T-cell (primary cell): ENCODE measurements at regions of chr12 and their contacts with region 1.

Region 1: DNA sequence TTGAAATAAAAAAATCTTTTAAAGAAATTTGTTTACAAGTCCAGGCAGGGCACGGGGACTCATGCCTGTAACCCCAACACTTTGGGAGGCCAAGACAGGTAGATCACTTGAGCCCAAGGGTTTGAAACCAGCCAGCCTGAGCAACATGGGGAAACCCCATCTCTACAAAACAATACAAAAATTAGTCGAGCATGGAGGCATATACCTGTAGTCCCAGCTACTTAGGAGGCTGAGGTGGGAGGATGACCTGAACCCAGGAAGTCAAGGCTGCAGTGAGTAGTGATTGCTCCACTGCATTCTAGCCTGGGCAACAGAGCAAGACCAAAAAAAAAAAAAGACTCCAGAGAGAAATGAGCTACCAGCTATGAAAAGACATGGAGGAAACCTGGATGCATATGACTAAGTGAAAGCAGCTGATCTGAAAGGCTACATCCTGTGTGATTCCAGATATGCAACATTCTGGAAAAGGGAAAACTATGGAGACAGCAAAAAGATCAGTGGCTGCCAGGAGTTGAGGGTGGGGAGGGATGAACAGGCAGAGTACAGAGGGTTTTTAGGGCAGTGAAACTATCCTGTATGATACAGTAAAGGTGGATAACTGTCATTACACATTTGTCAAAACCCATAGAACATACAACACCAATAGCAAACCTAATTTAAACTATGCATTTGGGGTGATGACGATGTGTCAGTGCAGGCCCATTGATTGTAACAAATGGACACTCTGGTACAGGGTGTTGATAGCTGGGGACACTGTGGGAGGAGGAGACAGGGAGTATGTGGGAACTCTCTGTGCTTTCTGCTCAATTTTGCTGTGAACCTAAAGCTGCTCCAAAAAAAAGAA is 59.9 kb downstream of the PRKAB1 start:
- DNase-seq: no peak
- ATAC-seq: no peak
- H3K4me3 ChIP-seq: no peak overlapping the region
- H3K4me3 Mint-ChIP-seq: no peak overlapping the region
- H3K27ac ChIP-seq: no peak overlapping the region
- H3K27ac Mint-ChIP-seq: no peak overlapping the region
- H3K4me1 ChIP-seq: no peaks in the 10 kb centered on the region
- H3K4me1 Mint-ChIP-seq: peaks cover 0 to 2% (median 0%) of the 10 kb centered on the region in 3 donors
- H3K27me3 ChIP-seq: no peaks in the 10 kb centered on the region
- H3K27me3 Mint-ChIP-seq: no peaks in the 10 kb centered on the region

Region 2: DNA sequence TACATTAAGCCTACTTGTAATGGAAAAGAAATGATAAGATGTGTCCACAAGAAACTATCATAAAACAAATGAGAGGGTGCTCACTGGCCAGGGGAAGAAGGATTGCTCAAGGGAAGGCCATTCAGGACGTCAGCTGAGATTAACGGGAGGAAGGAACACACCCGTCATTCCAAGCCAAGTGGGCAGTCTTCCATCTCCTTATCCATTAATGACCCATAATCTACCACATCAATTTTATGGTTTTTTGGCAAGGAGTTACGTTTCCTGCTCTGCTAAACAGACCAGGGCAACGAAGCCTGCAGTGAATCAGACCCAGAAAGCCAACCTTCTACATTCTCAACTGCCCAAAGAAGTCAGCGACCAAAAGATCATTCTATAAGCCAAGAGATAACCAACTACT is 34.8 kb before region 1 on chr12:
- CTCF ChIA-PET with region 1: no interaction called
- POLR2A ChIA-PET with region 1: interaction called in 1 of 2 experiments, 10 read pairs
- DNase-seq: no peak
- ATAC-seq: no peak
- H3K4me3 ChIP-seq: no peak overlapping the region
- H3K4me3 Mint-ChIP-seq: no peak overlapping the region
- H3K27ac ChIP-seq: no peak overlapping the region
- H3K27ac Mint-ChIP-seq: no peak overlapping the region
- H3K4me1 ChIP-seq: no peaks in the 10 kb centered on the region
- H3K4me1 Mint-ChIP-seq: no peaks in the 10 kb centered on the region
- H3K27me3 ChIP-seq: no peaks in the 10 kb centered on the region
- H3K27me3 Mint-ChIP-seq: no peaks in the 10 kb centered on the region

Region 3: DNA sequence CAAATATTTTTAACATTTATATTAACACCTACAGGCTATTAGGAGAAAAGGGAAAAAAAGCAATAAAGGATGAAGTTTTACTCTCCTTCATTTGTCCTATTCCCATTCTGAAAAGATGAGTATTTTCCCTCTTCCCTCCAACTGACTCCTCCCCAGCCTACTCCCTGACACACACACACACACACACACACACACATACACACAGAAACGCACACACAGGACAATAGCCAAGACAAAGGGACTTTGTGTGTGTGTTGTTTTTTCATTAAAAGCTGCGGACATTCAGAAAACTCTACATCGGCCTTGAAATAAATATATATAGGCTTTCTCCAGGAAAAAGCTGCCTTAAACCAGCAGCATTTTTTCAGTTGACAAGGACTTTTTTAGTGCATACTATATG is 14.9 kb after region 1 on chr12:
- CTCF ChIA-PET with region 1: interaction called in 1 of 2 experiments, 11 read pairs
- POLR2A ChIA-PET with region 1: interaction called, 3 to 8 read pairs
- DNase-seq: no peak
- ATAC-seq: no peak
- H3K4me3 ChIP-seq: no peak overlapping the region
- H3K4me3 Mint-ChIP-seq: no peak overlapping the region
- H3K27ac ChIP-seq: no peak overlapping the region
- H3K27ac Mint-ChIP-seq: no peak overlapping the region
- H3K4me1 ChIP-seq: no peaks in the 10 kb centered on the region
- H3K4me1 Mint-ChIP-seq: no peaks in the 10 kb centered on the region
- H3K27me3 ChIP-seq: no peaks in the 10 kb centered on the region
- H3K27me3 Mint-ChIP-seq: no peaks in the 10 kb centered on the region